ENCODE measurements at regions of chr11 and their contacts with region 1.

Region 1: DNA sequence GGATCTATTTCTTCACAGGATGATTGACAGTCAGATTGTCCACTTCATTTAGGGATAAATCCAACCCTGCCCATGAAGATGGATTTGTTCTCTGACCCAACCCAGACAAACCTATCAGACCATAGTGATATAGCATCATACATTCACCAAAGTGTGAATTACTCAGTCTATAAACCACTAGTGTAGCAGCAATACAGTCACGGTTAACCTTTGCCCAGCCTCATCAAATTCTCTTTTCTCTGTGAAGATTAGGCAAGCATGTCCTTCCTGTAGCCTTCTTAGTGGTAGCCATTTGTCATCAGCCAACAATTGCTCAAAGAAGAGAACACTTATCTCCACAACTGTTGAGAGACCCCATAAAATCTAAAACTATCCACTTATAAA is 14.4 kb upstream of the BIRC2 start:
- DNase-seq: no peak
- ATAC-seq: peak; percentile 96

Region 2: GRCh38 chr11:102666331-102666957 is 333.8 kb after region 1 on chr11:
- intact Hi-C with region 1: loop called in 1 of 2 experiments (anchors 10 kb)
- DNase-seq: no peak
- ATAC-seq: peak; percentile 75